Activated naive CD4-positive, alpha-beta T cell treated with anti-CD3 and anti-CD28 coated beads for 36 hours (primary cell): ENCODE measurements at regions of chr13 and their contacts with region 1.

Region 1: DNA sequence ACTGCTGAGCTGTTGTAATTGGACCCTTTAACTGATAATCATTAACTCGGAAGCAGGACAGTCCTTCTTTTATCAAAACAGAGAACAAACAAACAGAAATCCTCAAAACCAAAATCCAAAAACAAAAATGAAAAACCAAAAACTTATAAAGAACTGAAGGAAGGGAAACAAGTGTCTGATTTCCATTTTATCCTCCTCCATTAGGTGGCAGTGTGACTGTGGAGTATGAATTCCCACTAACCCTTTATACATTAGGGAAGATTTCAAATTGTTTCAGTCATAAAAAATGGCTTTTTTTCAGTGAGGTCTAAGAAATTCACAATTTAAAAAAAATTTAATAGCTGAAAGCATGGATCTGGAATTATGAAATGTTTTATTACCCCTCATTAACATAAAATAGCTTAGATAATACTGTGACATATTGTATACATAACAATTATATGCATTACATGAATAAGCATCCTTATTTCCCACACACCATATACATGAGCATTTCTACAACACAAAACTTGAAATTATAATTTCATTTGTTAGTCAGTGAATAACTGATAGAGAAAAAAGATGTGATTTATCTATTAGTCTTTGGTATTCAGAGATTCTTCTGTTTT is 1074.3 kb upstream of the PCDH9 start:
- DNase-seq: no peak
- H3K4me3 Mint-ChIP-seq: no peak overlapping the region
- H3K27ac Mint-ChIP-seq: no peak overlapping the region
- H3K4me1 Mint-ChIP-seq: no peaks in the 10 kb centered on the region
- H3K27me3 Mint-ChIP-seq: no peaks in the 10 kb centered on the region

Region 2: DNA sequence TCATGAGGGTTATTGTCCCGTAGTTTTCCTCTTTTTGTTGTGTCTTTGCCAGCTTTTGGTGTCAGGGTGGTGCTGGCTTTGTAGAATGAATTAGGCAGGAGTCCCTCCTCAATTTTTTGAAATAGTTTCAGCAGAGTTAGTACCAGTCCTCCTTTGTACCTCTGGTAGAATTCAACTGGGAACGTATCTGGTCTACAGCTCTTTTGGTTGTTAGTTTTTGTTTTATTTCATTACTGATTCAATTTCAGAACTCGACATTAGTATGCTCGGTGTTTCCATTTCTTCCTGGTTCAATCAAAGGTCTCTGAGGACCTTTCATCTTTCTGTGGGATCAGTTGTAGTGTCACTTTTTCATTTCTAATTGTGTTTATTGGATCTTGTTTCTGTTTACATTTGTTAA is 162.8 kb after region 1 on chr13:
- CTCF ChIA-PET with region 1: no interaction called
- intact Hi-C with region 1: no loop called
- DNase-seq: no peak
- H3K4me3 Mint-ChIP-seq: no peak overlapping the region
- H3K27ac Mint-ChIP-seq: no peak overlapping the region
- H3K4me1 Mint-ChIP-seq: no peaks in the 10 kb centered on the region
- H3K27me3 Mint-ChIP-seq: no peaks in the 10 kb centered on the region

Region 3: DNA sequence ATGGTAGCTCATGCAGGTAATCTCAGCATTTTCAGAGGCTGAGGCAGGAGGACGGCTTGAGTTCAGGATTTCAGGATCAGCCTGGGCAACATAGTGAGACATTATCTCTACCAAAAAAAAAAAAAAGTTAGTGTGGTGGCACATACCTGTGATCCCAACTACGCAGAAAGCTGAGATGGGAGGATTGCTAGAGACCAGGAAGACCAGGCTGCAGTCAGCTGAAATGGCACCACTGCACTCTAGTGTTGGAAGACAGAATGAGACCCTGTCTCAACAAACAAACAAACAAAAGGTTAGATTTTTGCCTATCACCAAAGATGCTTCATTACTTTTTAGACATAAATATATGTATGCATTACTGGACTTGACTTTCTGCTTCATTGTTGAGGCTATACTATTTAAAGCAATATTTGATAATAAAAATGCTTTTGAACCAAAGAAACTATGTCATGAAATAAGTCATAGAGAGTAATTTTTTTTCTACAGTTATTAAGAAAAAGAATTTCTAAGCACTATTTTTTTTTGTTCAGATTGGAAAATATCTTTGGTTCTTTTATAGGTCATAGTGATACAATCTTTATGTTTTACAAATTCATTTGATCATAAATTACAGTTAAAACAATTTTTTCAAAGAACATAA is 623.1 kb after region 1 on chr13:
- CTCF ChIA-PET with region 1: no interaction called
- intact Hi-C with region 1: loop called (anchors 5 kb)
- DNase-seq: no peak
- H3K4me3 Mint-ChIP-seq: no peak overlapping the region
- H3K27ac Mint-ChIP-seq: no peak overlapping the region
- H3K4me1 Mint-ChIP-seq: no peaks in the 10 kb centered on the region
- H3K27me3 Mint-ChIP-seq: no peaks in the 10 kb centered on the region

Region 4: DNA sequence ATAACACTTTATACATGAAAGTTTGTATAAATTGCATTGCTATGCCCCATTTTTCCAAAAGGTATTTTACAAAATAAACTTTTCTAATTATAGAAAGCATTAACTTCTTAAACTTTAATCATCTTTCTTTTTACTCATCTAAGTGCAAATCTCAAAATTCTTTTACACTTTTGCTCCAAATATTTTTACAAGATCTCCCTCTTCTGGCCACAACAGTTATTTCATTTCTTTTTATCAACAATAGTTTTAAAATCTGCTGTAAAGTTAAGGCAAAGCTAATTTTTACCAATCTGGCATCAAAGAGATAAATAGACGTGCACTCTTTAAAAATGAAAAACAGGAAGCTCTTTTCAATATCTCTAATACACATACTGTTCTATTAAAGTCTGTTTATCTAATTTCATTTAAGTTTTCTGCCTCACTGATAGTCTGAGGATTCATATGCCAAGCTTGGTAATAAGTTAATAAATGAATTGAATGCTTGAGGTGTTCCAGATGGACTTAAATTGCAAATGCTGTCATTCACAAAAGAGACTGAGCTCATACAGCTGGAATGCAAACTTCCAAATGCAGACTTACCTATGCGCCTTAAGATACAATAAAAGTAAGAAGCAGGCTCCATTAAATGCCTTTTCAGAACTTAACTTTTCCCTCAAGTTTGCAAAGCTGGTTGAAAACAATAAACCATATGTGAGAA is 1220.2 kb after region 1 on chr13:
- CTCF ChIA-PET with region 1: no interaction called
- intact Hi-C with region 1: loop called (anchors 10 kb)
- DNase-seq: no peak
- H3K4me3 Mint-ChIP-seq: no peak overlapping the region
- H3K27ac Mint-ChIP-seq: no peak overlapping the region
- H3K4me1 Mint-ChIP-seq: no peaks in the 10 kb centered on the region
- H3K27me3 Mint-ChIP-seq: no peaks in the 10 kb centered on the region

Region 5: DNA sequence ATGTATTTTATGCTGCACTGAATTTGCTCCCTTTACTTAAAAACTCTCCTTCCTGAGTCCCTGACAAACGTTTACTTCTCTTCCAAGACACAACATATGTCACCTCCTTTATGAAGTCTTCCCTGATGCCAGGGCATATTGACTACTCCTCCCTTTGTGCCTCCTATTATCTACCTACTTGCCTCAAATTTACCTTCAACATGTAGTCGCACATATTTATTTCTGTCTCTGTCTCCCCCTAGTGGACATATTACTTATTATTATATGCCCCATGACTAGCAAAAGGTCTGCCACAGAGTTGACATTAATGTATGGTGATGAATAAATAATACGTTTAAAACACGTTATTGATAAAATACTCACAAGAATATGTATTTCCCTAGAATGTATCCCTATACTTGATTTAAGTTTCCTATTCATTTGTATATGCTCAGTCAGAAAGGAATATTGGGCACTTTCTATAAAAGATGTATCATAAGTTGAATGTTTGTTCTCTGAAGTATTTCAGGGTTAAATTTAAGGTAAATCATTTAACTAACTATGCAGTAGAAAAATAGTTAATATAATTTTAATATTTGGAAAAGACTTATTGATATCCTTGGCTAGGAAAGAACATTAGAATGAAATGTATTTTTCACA is 1552.9 kb after region 1 on chr13:
- CTCF ChIA-PET with region 1: no interaction called
- intact Hi-C with region 1: loop called (anchors 5 kb)
- DNase-seq: no peak
- H3K4me3 Mint-ChIP-seq: no peak overlapping the region
- H3K27ac Mint-ChIP-seq: no peak overlapping the region
- H3K4me1 Mint-ChIP-seq: no peaks in the 10 kb centered on the region
- H3K27me3 Mint-ChIP-seq: no peaks in the 10 kb centered on the region